ENCODE measurements at regions of chr12 and their contacts with region 1.

Region 1: GRCh38 chr12:9750276-9751203 is 10.2 kb downstream of the CD69 start:
- DNase-seq: peak; percentile 89
- H3K4me3 Mint-ChIP-seq: peak overlapping the region; percentile 55
- H3K27ac Mint-ChIP-seq: peak overlapping the region; percentile 70
- H3K4me1 Mint-ChIP-seq: peaks cover 46% of the 10 kb centered on the region
- H3K27me3 Mint-ChIP-seq: no peaks in the 10 kb centered on the region

Region 2: DNA sequence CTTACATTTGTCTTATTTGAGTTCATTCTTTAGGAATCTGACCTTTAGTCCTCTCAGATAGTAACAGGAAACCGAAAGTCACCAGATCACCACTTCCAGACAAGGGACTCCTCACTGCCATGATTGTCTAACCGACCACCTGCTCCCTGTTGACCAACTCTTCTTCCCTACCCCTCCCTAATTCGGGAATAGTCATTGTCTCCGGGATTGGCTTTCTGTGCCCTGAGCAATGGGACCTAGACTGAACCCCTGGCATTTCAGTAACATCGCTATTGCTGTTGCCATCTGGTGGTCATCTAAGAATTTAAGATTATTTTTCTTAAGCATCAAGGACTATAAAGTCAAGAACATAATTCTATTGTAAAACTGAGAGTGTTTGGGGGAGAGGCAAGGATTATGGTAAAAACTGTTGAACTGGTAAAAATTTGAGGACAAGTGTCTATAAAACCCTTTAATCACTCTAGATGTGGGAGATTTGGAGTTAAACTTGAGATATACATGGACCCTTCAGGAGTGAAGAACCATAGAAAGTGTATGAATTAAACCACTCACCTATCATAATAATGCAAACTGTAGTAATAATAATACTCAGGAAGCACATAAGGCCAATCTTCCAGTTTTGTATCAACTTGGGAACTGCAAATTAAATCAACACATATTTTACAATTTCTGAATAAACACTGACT is 175.3 kb after region 1 on chr12:
- intact Hi-C with region 1: loop called (anchors 1 kb)
- DNase-seq: peak; percentile 73
- H3K4me3 Mint-ChIP-seq: peak overlapping the region; percentile 52
- H3K27ac Mint-ChIP-seq: no peak overlapping the region
- H3K4me1 Mint-ChIP-seq: peaks cover 21% of the 10 kb centered on the region
- H3K27me3 Mint-ChIP-seq: peaks cover 16% of the 10 kb centered on the region

Measured in activated CD4-positive, alpha-beta T cell treated with anti-CD3 and anti-CD28 coated beads, Interleukin-2, amount 10 ng/mL, durations not matched to agents 24 days and 14 days (primary cell).